Psoas muscle (tissue), 8 donors: ENCODE measurements at regions of chr2 and their contacts with region 1.

Region 1: GRCh38 chr2:129857200-129857599 is 122.3 kb upstream of the RAB6C start:
- DNase-seq: no peak
- ATAC-seq: no peak
- H3K4me3 ChIP-seq: no peak overlapping the region
- H3K27ac ChIP-seq: no peak overlapping the region
- H3K4me1 ChIP-seq: no peaks in the 10 kb centered on the region
- H3K27me3 ChIP-seq: no peaks in the 10 kb centered on the region
- CTCF ChIP-seq: no peak

Region 2: DNA sequence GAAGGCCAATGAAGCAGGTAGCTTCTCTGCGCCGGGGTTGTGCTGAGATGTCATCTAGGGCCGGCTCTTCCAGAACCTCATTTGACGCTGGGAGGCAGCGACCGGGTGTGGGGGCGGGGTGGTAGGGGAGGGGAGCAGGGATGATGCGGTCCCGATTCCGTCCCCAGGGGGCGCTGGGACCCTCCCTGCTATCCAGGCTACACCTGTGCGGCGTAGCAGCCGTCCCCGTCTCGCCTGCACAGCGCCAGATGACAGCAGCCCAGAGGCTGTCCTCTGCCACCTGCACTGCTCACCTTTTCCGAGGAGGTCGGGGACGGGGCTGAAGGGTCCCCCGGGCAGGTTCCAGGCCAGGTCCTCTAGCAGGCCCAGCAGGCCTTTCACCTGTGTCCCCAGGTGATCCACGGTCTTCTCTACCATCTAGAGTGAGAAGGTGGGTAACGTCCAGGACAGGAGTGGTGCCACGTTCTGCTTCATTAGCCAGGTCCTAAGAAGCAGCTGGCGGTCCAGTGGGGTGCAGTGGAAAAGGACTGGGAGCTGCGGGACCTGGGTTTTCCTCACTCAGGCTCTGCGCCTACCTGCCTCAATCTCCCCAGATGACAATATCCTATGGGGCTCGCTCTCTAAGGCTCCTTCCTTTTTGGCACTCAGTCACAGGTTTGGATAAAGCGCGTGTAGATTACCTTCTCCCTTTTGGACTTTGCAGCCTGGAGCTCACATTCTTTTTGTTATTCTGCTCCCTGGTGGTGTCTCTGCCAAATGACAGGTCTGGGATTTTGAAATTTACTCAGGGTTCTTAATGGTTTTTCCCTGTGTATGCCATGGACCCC is 66.3 kb after region 1 on chr2:
- intact Hi-C with region 1: loop called in 1 of 2 experiments (anchors 5 kb)
- DNase-seq: no peak
- ATAC-seq: peak; percentile 46 to 74 (median 57)
- H3K4me3 ChIP-seq: no peak overlapping the region
- H3K27ac ChIP-seq: no peak overlapping the region
- H3K4me1 ChIP-seq: no peaks in the 10 kb centered on the region
- H3K27me3 ChIP-seq: peaks cover 0 to 31% (median 5%) of the 10 kb centered on the region in 3 donors
- CTCF ChIP-seq: peak; percentile 39